Heart right ventricle (tissue), 16 donors: ENCODE measurements at regions of chr22 and their contacts with region 1.

Region 1: DNA sequence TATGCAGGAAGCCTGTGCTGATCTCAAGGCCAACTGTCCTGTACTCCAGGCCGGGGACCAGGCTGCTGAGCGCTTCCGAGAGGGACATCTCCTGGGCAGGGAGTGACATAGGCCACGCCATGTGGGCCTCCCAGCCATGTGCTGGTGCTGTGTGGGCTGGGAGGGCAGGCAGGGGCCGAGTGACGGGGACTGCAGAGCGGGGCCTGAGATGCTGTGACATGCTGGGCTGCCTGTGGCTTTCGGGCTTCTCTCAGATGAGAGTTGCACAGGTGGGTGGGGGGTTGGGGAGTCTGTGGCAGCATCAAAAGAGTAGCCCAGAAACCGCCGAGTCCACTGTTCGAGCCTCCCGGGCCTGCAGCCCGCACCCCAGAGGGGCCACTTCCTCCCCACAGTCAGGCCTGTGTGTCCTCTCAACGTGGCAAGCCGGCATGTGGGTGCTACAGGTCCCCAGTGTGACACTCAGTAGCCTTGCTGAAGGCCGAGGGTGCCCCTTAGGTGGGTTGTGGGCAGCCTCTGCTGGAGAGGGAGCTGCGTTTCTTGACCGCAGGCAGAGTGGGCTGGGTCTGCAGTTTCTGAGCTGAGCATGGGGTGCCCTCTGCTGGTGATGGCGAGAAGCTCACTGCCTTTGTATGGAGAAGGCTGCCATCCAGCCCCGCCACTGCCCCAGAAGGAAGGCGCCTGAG is 101.2 kb downstream of the BCR start:
- DNase-seq: peak; percentile 84 to 85
- ATAC-seq: peak; percentile 74 to 92 (median 84)
- H3K4me3 ChIP-seq: no peak overlapping the region
- H3K27ac ChIP-seq: peak overlapping the region in 6 of 10 donors; percentile 20 to 59 (median 38)
- H3K4me1 ChIP-seq: peaks cover 9 to 36% (median 26%) of the 10 kb centered on the region in 9 donors
- H3K27me3 ChIP-seq: no peaks in the 10 kb centered on the region
- CTCF ChIP-seq: peak; percentile 83 to 97 (median 95)

Region 2: GRCh38 chr22:23219822-23220484 is 61.6 kb before region 1 on chr22:
- intact Hi-C with region 1: loop called in 1 of 10 experiments (anchors 10 kb)
- DNase-seq: no peak
- ATAC-seq: peak in 2 of 8 donors; percentile 5 to 17
- H3K4me3 ChIP-seq: no peak overlapping the region
- H3K27ac ChIP-seq: peak overlapping the region in 4 of 10 donors; percentile 48 to 78 (median 71)
- H3K4me1 ChIP-seq: peaks cover 54 to 100% (median 90%) of the 10 kb centered on the region in 9 donors
- H3K27me3 ChIP-seq: no peaks in the 10 kb centered on the region
- CTCF ChIP-seq: no peak

Region 3: GRCh38 chr22:23240639-23241389 is 40.7 kb before region 1 on chr22:
- intact Hi-C with region 1: loop called in 1 of 10 experiments (anchors 5 kb)
- DNase-seq: no peak
- ATAC-seq: no peak
- H3K4me3 ChIP-seq: no peak overlapping the region
- H3K27ac ChIP-seq: no peak overlapping the region
- H3K4me1 ChIP-seq: peaks cover 17 to 66% (median 28%) of the 10 kb centered on the region in 9 donors
- H3K27me3 ChIP-seq: no peaks in the 10 kb centered on the region
- CTCF ChIP-seq: peak in 5 of 9 donors; percentile 31 to 47 (median 44)

Region 4: DNA sequence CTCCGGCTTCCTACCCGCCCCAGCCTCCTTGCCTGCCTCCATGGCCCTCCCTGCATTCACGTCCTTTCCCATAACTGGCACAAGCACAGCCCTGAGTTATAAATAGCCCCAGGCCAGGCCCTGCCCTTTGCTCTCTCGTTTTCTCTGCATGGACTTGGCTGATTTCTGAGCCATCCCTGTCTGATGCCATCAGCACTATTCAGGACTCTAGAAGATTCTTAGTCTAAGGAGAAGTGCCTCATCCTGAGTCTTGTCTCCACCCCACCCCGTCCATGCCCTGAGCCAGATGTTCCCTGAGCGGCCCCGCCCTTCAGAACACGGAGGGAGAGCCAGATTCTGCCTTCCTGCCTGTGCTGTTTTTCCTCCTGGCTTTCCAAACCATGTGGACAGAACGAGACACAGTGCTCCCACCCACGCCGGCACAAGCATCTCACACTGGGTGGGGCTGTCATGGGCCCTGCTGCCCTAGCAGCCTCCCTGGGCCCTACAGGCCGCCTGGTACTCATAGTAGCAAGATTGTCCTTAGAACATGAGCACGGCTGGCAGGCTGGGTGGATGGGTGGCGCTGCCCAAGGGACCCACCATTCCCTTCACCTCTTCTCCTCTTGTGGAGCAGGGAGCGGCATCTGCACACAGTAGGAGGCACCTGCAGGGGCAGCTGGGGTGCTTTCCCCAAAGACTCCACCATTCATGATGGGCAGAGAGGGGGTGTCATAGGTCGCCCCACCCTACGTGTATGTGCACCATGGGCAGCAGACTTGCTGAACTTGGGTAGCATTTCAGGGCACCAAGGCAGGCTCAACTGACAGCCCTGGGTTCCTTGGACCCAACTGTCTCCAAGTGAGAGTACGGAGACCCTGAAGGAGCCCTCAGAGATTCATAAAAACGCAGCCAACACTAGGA is 24.3 kb before region 1 on chr22:
- intact Hi-C with region 1: loop called in 1 of 10 experiments (anchors 1 kb)
- DNase-seq: peak; percentile 53 to 74
- ATAC-seq: peak; percentile 78 to 94 (median 90)
- H3K4me3 ChIP-seq: no peak overlapping the region
- H3K27ac ChIP-seq: peak overlapping the region; percentile 13 to 71 (median 66)
- H3K4me1 ChIP-seq: peaks cover 20 to 32% (median 27%) of the 10 kb centered on the region in 9 donors
- H3K27me3 ChIP-seq: no peaks in the 10 kb centered on the region
- CTCF ChIP-seq: no peak